ENCODE measurements at regions of chr20 and their contacts with region 1.

Region 1: GRCh38 chr20:33666293-33667244 is at the start of gene ACTL10:
- DNase-seq: peak; percentile 87
- H3K4me3 Mint-ChIP-seq: peak within 1 kb of the TSS; percentile 80
- H3K27ac Mint-ChIP-seq: peak within 1 kb of the TSS; percentile 94
- H3K4me1 Mint-ChIP-seq: peaks cover 31% of the 10 kb centered on the region
- H3K27me3 Mint-ChIP-seq: no peaks in the 10 kb centered on the region
- total RNA-seq, gene ACTL10: 0.96 to 1.0 TPM

Region 2: DNA sequence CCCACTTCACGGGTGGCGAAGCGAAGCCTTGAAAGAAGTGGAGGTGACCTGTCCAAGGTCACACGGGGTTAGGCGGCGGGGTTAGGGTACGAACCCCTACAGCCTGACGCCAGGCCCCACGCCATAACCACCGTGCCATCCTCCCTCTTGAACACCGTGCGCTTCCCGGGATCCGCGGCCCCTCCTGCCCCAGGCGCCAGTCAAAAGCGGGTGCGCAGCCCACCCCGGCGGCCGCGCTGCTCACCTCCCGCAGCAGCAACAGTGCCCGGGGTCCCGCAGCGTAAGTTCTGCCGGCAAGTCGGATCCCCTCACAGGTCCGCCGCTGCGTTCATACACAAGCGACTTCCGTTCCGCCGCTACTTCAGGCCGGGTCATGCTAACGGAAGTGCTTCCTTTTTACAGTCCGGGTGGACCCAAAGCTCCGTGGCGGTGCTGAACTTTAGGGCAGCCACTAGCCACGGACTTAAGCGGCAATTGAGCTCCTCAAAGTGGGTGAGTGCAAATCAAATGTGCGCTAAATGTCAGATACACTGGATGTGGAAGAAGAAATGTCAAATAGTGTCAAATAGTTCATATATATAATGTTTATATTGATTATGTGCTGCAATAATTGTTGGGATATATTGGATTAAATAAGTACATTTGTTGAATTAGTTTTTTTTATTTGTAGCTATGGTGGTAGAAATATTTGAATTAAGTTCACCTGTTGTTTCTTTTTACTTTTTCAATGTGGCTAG is 265.2 kb before region 1 on chr20 and contains the start of gene CDK5RAP1:
- CTCF ChIA-PET with region 1: interaction called, 6 read pairs
- intact Hi-C with region 1: loop called (anchors 2 kb)
- DNase-seq: peak; percentile 92
- H3K4me3 Mint-ChIP-seq: peak within 1 kb of the TSS; percentile 94
- H3K27ac Mint-ChIP-seq: peak within 1 kb of the TSS; percentile 81
- H3K4me1 Mint-ChIP-seq: peaks cover 40% of the 10 kb centered on the region
- H3K27me3 Mint-ChIP-seq: no peaks in the 10 kb centered on the region
- total RNA-seq, gene CDK5RAP1: 42.4 to 43.0 TPM

Region 3: GRCh38 chr20:33460711-33461110 is 205.9 kb before region 1 on chr20:
- CTCF ChIA-PET with region 1: interaction called, 16 read pairs
- intact Hi-C with region 1: loop called (anchors 1 kb)
- DNase-seq: peak; percentile 9
- H3K4me3 Mint-ChIP-seq: no peak overlapping the region
- H3K27ac Mint-ChIP-seq: no peak overlapping the region
- H3K4me1 Mint-ChIP-seq: no peaks in the 10 kb centered on the region
- H3K27me3 Mint-ChIP-seq: no peaks in the 10 kb centered on the region

Region 4: DNA sequence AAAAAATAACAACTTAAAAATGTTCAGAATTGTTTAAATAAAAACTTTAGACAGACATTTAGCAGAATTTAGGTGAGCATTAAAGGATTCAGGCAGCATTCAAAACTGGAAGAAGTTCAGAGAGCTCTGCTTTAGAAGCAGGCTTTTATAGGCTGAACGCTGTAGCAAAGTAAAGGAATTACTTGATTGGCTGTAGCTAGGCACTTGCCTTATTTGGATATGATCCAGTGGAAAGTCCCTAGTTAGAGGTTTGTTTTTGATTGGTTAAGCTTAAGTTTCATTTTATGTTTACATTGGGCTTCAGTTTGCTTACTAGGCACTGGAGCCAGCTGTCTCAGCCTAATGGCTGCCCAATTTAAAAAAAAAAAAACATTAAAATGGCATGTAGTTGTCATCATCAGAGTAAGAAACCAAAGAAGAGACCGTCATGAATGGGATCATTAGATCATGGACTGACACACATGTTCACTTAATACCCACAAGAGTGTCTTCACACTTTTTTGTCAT is 111.6 kb before region 1 on chr20:
- CTCF ChIA-PET with region 1: interaction called, 3 read pairs
- intact Hi-C with region 1: loop called (anchors 2 kb)
- DNase-seq: peak; percentile 46
- H3K4me3 Mint-ChIP-seq: peak overlapping the region; percentile 21
- H3K27ac Mint-ChIP-seq: peak overlapping the region; percentile 90
- H3K4me1 Mint-ChIP-seq: peaks cover 30% of the 10 kb centered on the region
- H3K27me3 Mint-ChIP-seq: no peaks in the 10 kb centered on the region

Region 5: GRCh38 chr20:33606118-33606771 is 60.3 kb before region 1 on chr20:
- CTCF ChIA-PET with region 1: no interaction called
- intact Hi-C with region 1: no loop called
- DNase-seq: no peak
- H3K4me3 Mint-ChIP-seq: no peak overlapping the region
- H3K27ac Mint-ChIP-seq: no peak overlapping the region
- H3K4me1 Mint-ChIP-seq: peaks cover 20% of the 10 kb centered on the region
- H3K27me3 Mint-ChIP-seq: no peaks in the 10 kb centered on the region

Region 6: DNA sequence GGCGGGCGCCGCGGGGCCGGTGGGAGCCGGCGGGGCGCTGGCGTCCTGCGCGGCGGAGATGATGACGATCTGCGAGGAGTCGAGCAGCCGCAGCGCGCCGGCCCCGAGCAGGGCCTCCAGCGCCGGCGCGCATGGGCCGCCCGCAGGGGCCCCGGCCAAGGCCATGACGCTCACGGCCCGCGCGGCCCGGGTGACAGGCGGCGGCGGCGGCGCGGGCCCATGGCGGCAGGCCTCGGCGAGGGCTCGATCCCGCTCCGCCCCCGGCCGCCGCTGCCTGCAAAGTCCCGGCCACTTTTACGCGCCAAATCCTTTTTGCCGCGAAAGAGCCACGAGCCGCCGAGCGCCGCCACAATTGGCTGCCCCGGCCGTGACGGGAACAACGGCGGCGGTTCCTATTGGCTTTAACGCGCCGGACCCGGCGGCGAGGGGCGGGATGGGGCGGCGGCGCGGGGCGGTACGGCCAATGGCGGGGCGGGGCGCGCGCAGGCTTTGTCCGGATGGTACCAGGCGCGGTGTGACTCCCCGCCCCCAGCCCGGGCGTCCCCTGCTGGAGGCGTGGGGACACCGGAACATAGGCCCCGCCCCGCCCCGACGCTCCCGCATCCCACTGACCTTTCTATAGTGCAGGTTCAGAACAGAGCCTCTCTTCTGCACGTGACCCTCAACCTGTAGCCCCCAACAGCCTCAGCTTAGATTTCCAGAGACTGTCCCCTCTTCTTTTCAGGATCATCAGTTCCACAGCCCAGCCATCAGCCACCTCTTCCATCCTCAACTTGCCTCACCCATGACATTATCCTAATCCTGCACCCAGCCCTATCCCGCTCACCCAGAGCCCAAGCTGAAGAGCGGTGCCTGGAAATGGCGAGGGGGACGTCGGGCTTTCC is 19.8 kb after region 1 on chr20 and contains the start of gene E2F1:
- CTCF ChIA-PET with region 1: interaction called, 36 read pairs
- intact Hi-C with region 1: loop called (anchors 1 kb)
- DNase-seq: peak; percentile 97
- H3K4me3 Mint-ChIP-seq: peak within 1 kb of the TSS; percentile 87
- H3K27ac Mint-ChIP-seq: peak within 1 kb of the TSS; percentile 88
- H3K4me1 Mint-ChIP-seq: peaks cover 62% of the 10 kb centered on the region
- H3K27me3 Mint-ChIP-seq: no peaks in the 10 kb centered on the region
- total RNA-seq, gene E2F1: 69.3 to 70.0 TPM

Region 7: GRCh38 chr20:33810885-33811777 is 144.6 kb after region 1 on chr20 and contains the start of gene CHMP4B:
- CTCF ChIA-PET with region 1: no interaction called
- intact Hi-C with region 1: loop called (anchors 5 kb)
- DNase-seq: peak; percentile 99
- H3K4me3 Mint-ChIP-seq: peak within 1 kb of the TSS; percentile 87
- H3K27ac Mint-ChIP-seq: peak within 1 kb of the TSS; percentile 87
- H3K4me1 Mint-ChIP-seq: peaks cover 42% of the 10 kb centered on the region
- H3K27me3 Mint-ChIP-seq: no peaks in the 10 kb centered on the region
- total RNA-seq, gene CHMP4B: 68.9 to 69.7 TPM